Sciatic nerve (tissue), 2 donors: ENCODE measurements at regions of chr4 and their contacts with region 1.

Region 1: GRCh38 chr4:144611846-144612245 is 34.1 kb upstream of the HHIP start:
- DNase-seq: no peak
- ATAC-seq: no peak

Region 2: GRCh38 chr4:144090744-144091143 is 521.1 kb before region 1 on chr4:
- intact Hi-C with region 1: no loop called
- DNase-seq: no peak
- ATAC-seq: no peak

Region 3: DNA sequence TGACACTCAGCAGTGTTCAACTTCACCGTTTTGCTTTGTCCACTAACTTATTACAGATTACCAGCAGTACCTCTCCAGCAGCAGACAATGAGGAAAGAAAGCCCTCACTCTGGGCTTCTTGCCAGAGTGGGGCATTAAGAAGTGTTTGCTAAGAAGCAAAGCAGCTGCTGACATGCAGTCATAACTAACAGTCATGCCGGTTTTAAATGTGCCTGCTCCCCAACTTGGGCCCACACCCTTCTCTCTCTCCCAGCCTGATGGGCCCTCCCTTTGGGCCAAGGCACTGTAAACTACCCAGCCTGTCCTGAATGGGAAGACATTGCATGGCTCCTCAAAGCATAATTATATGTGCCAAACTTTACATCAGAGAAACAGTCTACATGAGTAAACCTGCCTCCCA is 20.4 kb before region 1 on chr4:
- intact Hi-C with region 1: no loop called
- DNase-seq: no peak
- ATAC-seq: no peak

Region 4: GRCh38 chr4:144649646-144650045 is 37.8 kb after region 1 on chr4:
- intact Hi-C with region 1: loop called (anchors 1 kb)
- DNase-seq: no peak
- ATAC-seq: no peak

Region 5: GRCh38 chr4:144845411-144845810 is 233.6 kb after region 1 on chr4:
- intact Hi-C with region 1: no loop called
- DNase-seq: no peak
- ATAC-seq: no peak